ENCODE measurements at regions of chr3 and their contacts with region 1.

Region 1: DNA sequence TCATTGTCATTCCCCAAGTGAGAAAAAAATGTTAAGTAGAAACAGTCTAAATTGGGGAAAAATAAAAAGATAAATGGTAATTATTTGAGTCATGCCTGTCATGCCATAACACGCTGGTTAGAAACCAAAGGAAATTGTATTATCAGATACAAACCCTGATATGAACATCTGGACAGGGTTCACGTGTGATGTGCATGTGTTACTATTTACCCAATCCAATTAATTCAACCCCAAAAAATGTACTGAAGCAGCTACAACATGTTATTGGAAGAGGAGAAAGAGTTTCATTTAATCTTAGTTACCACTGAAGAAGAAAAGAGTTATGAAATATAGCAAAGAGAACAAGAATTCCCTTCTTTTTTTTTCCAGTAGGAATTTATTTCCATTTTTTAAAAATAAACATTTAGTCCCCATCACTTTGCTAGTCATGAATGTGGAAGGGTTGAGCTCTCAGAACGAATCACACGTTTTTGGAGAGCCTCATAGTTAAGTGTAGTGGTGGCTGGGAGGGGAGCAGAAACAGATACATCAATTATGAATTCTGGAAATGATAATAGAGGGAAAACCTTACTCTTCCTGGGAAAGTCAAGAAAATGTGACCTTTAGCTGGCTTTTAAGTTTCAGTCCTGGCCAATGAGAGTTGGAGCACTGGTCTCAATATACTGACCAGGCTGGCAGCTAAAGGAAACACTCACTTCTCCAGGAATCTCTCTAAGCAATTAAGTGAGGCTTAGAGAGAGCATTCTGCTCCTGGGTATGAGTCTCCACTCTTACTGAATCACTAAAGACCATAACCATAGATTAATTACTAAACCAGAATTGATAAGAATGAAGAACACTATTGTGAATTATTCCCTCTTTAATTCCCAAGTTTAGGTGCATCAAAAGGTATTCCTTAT is 796.5 kb downstream of the GRM7 start:
- DNase-seq: no peak
- ATAC-seq: no peak
- H3K4me3 ChIP-seq: no peak overlapping the region
- H3K4me3 Mint-ChIP-seq: no peak overlapping the region
- H3K27ac ChIP-seq: no peak overlapping the region
- H3K27ac Mint-ChIP-seq: no peak overlapping the region
- H3K4me1 ChIP-seq: no peaks in the 10 kb centered on the region
- H3K4me1 Mint-ChIP-seq: no peaks in the 10 kb centered on the region
- H3K27me3 ChIP-seq: no peaks in the 10 kb centered on the region
- H3K27me3 Mint-ChIP-seq: peaks cover 5% of the 10 kb centered on the region
- CTCF ChIP-seq: no peak

Region 2: GRCh38 chr3:7625021-7625420 is 32.4 kb before region 1 on chr3:
- CTCF ChIA-PET with region 1: interaction called, 3 read pairs
- POLR2A ChIA-PET with region 1: no interaction called
- intact Hi-C with region 1: loop called in 1 of 2 experiments (anchors 2 kb)
- DNase-seq: no peak
- ATAC-seq: no peak
- H3K4me3 ChIP-seq: no peak overlapping the region
- H3K4me3 Mint-ChIP-seq: no peak overlapping the region
- H3K27ac ChIP-seq: no peak overlapping the region
- H3K27ac Mint-ChIP-seq: no peak overlapping the region
- H3K4me1 ChIP-seq: no peaks in the 10 kb centered on the region
- H3K4me1 Mint-ChIP-seq: no peaks in the 10 kb centered on the region
- H3K27me3 ChIP-seq: no peaks in the 10 kb centered on the region
- H3K27me3 Mint-ChIP-seq: no peaks in the 10 kb centered on the region
- CTCF ChIP-seq: no peak

Measured in CD4-positive, alpha-beta T cell (primary cell).